ENCODE measurements at regions of chr4 and their contacts with region 1.

Region 1: DNA sequence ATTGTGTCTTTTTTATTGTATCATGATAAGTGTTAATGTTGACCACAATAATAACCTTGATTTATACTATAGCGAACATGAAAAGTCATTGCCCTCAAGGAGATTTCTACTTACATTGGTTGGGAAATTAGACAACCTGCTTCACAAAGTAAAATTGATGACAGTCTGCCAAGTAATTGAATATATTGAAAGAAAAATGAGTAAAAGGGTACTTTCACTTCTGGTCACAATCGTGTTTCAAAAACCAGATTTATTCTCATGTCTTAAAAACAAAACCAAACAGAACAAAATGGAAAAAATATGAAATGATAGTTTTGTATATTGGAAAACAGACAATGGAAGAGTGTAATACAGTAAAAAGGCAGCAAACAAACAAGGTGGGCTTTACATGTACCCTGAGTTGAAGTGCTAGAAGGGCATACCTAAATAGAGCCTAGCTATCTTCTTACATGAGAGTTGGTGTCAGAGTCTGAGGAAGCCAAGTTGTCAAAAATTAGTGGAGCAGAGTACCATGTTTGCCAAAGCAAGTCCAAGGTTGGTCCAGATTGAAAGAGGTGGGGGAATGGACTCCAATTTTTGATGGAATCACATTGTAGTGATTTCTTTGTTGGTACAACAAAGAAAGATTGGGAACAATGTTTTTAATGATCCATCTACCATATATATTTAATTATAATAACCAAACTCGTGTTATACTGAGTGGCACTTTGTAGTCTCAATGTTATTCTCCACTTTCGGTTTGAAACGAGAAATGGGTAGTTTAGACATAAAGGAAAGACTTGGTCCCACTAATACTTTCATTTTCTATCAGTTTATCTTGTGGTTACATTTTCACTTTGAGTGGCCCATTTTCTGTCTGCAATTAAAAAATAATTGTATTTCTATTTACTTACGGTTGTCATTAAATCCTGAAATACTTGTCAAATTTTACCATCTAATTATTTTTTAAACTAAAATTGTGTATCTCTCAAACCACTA is 775.6 kb downstream of the STIM2 start:
- DNase-seq: no peak
- H3K4me3 Mint-ChIP-seq: no peak overlapping the region
- H3K27ac Mint-ChIP-seq: no peak overlapping the region
- H3K4me1 Mint-ChIP-seq: no peaks in the 10 kb centered on the region
- H3K27me3 Mint-ChIP-seq: no peaks in the 10 kb centered on the region
- CTCF ChIP-seq: no peak

Region 2: DNA sequence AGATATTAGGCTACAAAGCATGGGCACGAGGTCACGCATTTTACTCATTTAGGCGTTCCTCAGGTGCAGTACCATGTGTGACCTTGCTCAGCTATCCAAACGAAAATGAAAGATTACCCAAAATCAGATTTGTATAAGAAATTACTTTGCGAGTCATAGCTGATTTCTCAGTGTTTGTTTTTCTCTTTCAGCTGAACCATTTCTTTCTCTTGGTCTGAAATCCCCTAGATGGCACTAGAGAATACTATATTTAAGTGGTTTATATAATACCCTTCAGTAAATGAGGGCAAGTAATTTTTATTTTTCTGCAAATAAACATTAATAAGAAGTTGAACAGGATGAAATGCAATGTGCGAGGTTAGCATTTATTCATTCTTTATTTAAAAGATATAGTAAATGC is 278.9 kb before region 1 on chr4:
- CTCF ChIA-PET with region 1: no interaction called
- intact Hi-C with region 1: loop called (anchors 10 kb)
- DNase-seq: no peak
- H3K4me3 Mint-ChIP-seq: no peak overlapping the region
- H3K27ac Mint-ChIP-seq: no peak overlapping the region
- H3K4me1 Mint-ChIP-seq: no peaks in the 10 kb centered on the region
- H3K27me3 Mint-ChIP-seq: no peaks in the 10 kb centered on the region
- CTCF ChIP-seq: no peak

Region 3: GRCh38 chr4:27467351-27467750 is 168.9 kb before region 1 on chr4:
- CTCF ChIA-PET with region 1: no interaction called
- intact Hi-C with region 1: no loop called
- DNase-seq: no peak
- H3K4me3 Mint-ChIP-seq: no peak overlapping the region
- H3K27ac Mint-ChIP-seq: no peak overlapping the region
- H3K4me1 Mint-ChIP-seq: no peaks in the 10 kb centered on the region
- H3K27me3 Mint-ChIP-seq: no peaks in the 10 kb centered on the region
- CTCF ChIP-seq: no peak